T-cell (primary cell): ENCODE measurements at regions of chr14 and their contacts with region 1.

Region 1: GRCh38 chr14:49633640-49634546 is 1.2 kb downstream of the DNAAF2 start:
- DNase-seq: peak; percentile 83 to 96 (median 91)
- ATAC-seq: peak; percentile 84 to 88 (median 85)
- H3K4me3 ChIP-seq: peak overlapping the region; percentile 92 to 96
- H3K4me3 Mint-ChIP-seq: peak overlapping the region; percentile 95 to 99 (median 97)
- H3K27ac ChIP-seq: peak overlapping the region; percentile 98
- H3K27ac Mint-ChIP-seq: peak overlapping the region; percentile 92 to 94
- H3K4me1 ChIP-seq: peaks cover 4 to 41% of the 10 kb centered on the region in 2 experiments
- H3K4me1 Mint-ChIP-seq: peaks cover 48 to 68% (median 63%) of the 10 kb centered on the region in 3 donors
- H3K27me3 ChIP-seq: no peaks in the 10 kb centered on the region
- H3K27me3 Mint-ChIP-seq: no peaks in the 10 kb centered on the region

Region 2: DNA sequence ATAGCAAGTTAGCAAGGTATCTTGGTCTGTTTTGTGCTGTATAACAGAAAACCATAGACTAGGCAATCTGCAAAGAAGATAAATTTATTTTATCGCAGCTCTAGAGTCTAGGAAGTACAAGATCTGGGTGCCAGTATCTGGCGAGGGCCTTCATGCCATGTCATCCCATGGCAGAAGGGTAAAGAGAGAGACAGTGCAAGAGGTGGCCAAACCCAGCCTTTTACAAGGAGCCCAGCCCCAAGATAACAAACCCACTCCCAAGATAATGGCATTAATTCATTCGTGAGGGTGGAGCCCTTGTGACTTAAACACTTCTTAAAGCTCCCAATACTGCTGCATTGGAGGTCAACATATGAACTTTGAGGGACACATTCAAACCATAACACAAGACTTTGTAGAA is 64.6 kb before region 1 on chr14:
- CTCF ChIA-PET with region 1: no interaction called
- POLR2A ChIA-PET with region 1: no interaction called
- DNase-seq: no peak
- ATAC-seq: no peak
- H3K4me3 ChIP-seq: no peak overlapping the region
- H3K4me3 Mint-ChIP-seq: no peak overlapping the region
- H3K27ac ChIP-seq: no peak overlapping the region
- H3K27ac Mint-ChIP-seq: no peak overlapping the region
- H3K4me1 ChIP-seq: no peaks in the 10 kb centered on the region
- H3K4me1 Mint-ChIP-seq: no peaks in the 10 kb centered on the region
- H3K27me3 ChIP-seq: no peaks in the 10 kb centered on the region
- H3K27me3 Mint-ChIP-seq: no peaks in the 10 kb centered on the region

Region 3: GRCh38 chr14:49620182-49621113 is 13.4 kb before region 1 on chr14 and contains the starts of genes MGAT2 and RPL36AL:
- CTCF ChIA-PET with region 1: interaction called, 5 to 77 read pairs
- POLR2A ChIA-PET with region 1: interaction called, 8 to 59 read pairs
- DNase-seq: peak; percentile 84 to 96 (median 91)
- ATAC-seq: peak; percentile 88 to 91 (median 90)
- H3K4me3 ChIP-seq: peak within 1 kb of the TSS; percentile 74 to 78
- H3K4me3 Mint-ChIP-seq: peak within 1 kb of the TSS; percentile 97 to 99 (median 97)
- H3K27ac ChIP-seq: peak within 1 kb of the TSS; percentile 95
- H3K27ac Mint-ChIP-seq: peak within 1 kb of the TSS; percentile 98 to 99
- H3K4me1 ChIP-seq: peaks cover 20 to 34% of the 10 kb centered on the region in 2 experiments
- H3K4me1 Mint-ChIP-seq: peaks cover 51 to 58% (median 58%) of the 10 kb centered on the region in 3 donors
- H3K27me3 ChIP-seq: no peaks in the 10 kb centered on the region
- H3K27me3 Mint-ChIP-seq: no peaks in the 10 kb centered on the region
- total RNA-seq, gene MGAT2: 21.7 to 54.1 (median 41.6) TPM
- total RNA-seq, gene RPL36AL: 211 to 322 (median 291) TPM

Region 4: DNA sequence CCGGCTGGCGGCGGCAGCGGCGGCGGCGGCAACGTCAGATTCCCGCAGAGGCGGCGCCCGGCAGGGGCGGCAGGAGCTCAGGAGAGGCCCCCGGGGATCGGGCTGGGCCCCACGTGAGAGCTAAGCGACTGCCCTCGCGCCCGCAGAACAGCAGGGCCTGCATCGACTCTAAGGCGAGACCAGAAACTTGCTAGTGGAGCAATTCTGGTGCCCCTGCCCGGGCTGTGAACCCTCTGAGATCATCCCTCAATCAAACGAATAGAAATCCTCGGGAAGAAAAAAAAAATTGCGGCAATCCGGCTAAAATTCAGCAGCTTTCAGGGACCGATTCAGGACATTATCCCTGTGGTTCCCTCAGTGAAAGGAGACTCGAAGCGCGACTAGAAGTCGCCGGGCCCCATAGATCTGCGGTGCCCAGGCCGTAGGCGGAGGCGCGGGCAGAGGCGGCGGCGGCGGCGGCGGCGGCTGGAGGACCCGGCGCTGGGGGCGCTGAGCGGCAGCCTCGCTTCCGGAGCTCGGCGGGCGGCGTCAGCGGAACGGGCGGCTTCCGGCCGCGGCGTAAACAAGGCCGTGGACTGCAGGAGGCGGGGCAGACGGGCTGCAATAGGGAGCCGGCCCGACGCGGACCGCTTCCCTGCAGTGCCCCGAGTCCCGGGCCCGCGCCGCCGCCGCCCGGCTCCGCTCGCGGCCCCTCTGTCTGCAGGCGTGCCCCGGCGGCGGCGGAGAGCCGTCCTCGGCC is 133.8 kb after region 1 on chr14 and contains the start of gene KLHDC2:
- CTCF ChIA-PET with region 1: interaction called, 4 to 49 read pairs
- POLR2A ChIA-PET with region 1: interaction called in 1 of 2 experiments, 10 read pairs
- DNase-seq: peak; percentile 78 to 93 (median 86)
- ATAC-seq: peak; percentile 81 to 91 (median 88)
- H3K4me3 ChIP-seq: peak within 1 kb of the TSS; percentile 98 to 99
- H3K4me3 Mint-ChIP-seq: peak within 1 kb of the TSS; percentile 92 to 98 (median 95)
- H3K27ac ChIP-seq: peak within 1 kb of the TSS; percentile 98
- H3K27ac Mint-ChIP-seq: peak within 1 kb of the TSS; percentile 98 to 99
- H3K4me1 ChIP-seq: peaks cover 10 to 32% of the 10 kb centered on the region in 2 experiments
- H3K4me1 Mint-ChIP-seq: peaks cover 33 to 40% (median 38%) of the 10 kb centered on the region in 3 donors
- H3K27me3 ChIP-seq: no peaks in the 10 kb centered on the region
- H3K27me3 Mint-ChIP-seq: no peaks in the 10 kb centered on the region
- total RNA-seq, gene KLHDC2: 69.0 to 115 (median 69.2) TPM

Region 5: GRCh38 chr14:49828640-49829039 is 194.7 kb after region 1 on chr14:
- CTCF ChIA-PET with region 1: interaction called in 1 of 2 experiments, 27 read pairs
- POLR2A ChIA-PET with region 1: interaction called in 1 of 2 experiments, 9 read pairs
- DNase-seq: no peak
- ATAC-seq: no peak
- H3K4me3 ChIP-seq: no peak overlapping the region
- H3K4me3 Mint-ChIP-seq: no peak overlapping the region
- H3K27ac ChIP-seq: no peak overlapping the region
- H3K27ac Mint-ChIP-seq: no peak overlapping the region
- H3K4me1 ChIP-seq: no peaks in the 10 kb centered on the region
- H3K4me1 Mint-ChIP-seq: peaks cover 6 to 12% (median 9%) of the 10 kb centered on the region in 3 donors
- H3K27me3 ChIP-seq: no peaks in the 10 kb centered on the region
- H3K27me3 Mint-ChIP-seq: no peaks in the 10 kb centered on the region

Region 6: DNA sequence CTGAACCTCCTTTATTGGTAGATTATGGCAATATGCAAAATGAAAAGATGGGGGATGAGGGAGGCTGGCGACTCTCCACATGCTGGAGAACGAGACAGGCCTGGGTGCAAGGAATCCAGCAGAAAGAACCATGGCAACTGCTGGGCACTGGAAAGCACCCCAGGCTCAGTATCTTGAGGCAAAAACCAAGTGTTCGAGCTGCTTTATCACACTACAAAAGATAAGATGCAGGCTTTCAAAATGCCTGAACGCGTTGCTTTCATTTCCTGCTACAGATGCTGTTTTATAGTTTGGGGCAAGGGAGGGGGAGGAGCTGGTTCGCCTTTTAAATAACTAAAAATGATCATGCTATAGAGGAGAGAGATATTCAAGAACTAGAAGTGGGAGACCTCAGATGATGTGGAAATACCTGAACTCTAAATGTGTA is 1158.2 kb after region 1 on chr14:
- CTCF ChIA-PET with region 1: no interaction called
- POLR2A ChIA-PET with region 1: interaction called in 1 of 2 experiments, 14 read pairs
- DNase-seq: peak in 18 of 35 experiments; percentile 8 to 61 (median 22)
- ATAC-seq: peak; percentile 64 to 75 (median 69)
- H3K4me3 ChIP-seq: peak overlapping the region; percentile 20 to 23
- H3K4me3 Mint-ChIP-seq: peak overlapping the region; percentile 66 to 74 (median 74)
- H3K27ac ChIP-seq: peak overlapping the region; percentile 76
- H3K27ac Mint-ChIP-seq: peak overlapping the region; percentile 91 to 98
- H3K4me1 ChIP-seq: peaks cover 54 to 55% of the 10 kb centered on the region in 2 experiments
- H3K4me1 Mint-ChIP-seq: peaks cover 90 to 93% (median 92%) of the 10 kb centered on the region in 3 donors
- H3K27me3 ChIP-seq: no peaks in the 10 kb centered on the region
- H3K27me3 Mint-ChIP-seq: no peaks in the 10 kb centered on the region